Activated CD4-positive, alpha-beta memory T cell treated with anti-CD3 and anti-CD28 coated beads for 36 hours (primary cell): ENCODE measurements at regions of chr15 and their contacts with region 1.

Region 1: DNA sequence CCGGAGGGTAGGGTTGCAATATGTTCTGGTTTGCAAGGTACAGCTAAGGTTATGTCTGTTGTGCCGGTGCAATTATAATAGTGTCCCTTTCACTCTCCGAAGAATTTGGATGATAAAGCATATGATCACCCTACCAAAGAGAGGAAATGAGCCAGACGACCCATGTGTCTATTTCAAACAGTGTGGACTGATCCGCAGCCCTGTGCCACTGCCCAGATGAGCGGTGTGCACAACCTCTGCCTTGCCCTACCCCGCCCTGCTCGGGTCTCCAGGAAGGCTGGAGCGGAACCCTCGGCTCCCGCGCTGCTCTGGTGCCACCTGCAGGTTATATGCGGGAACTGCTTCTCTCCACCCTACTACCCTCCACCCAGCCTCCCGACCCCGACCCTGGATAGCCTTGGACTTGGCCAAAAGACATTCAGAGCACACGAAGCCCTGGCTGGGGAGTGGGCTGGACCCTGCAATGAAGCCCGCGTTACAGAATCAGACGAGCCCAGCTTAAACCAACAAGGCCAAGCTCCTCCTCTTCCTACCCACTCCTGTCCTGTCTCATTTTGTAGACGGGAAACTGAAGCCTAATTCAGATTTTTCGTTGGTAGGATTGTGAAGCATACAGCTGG is 68.4 kb upstream of the CHRNB4 start:
- DNase-seq: peak; percentile 80
- H3K4me3 Mint-ChIP-seq: no peak overlapping the region
- H3K27ac Mint-ChIP-seq: no peak overlapping the region
- H3K4me1 Mint-ChIP-seq: peaks cover 4% of the 10 kb centered on the region
- H3K27me3 Mint-ChIP-seq: peaks cover 24% of the 10 kb centered on the region

Region 2: DNA sequence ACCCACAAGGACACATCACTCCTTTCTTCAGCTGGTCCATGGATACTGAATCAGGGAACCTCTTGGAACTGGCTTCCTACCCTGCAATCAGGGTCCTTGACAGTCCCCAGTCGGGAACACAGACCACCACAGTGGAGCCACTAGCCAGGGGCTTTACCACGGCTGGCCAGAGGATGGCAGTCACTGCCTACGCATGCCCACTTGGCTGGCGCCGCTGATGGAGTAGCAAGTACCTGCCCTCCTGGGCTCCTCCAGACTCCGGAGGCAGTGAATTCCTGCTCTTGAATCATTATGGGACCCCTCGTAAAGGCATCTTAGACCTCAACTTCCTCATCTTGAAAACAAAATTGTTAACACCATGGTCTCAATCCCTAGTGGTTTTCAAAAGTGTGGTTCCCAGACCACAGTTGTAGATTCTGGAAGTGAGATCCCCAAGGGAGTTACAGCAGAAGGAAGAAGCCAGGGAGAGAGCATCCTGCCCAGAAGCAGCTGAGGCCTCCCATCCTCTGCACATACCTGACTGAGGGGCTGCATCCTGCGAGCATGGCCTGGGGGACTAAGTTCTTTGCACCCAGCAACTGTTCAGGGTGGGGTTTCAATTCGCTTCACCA is 400.8 kb before region 1 on chr15:
- CTCF ChIA-PET with region 1: interaction called, 4 read pairs
- POLR2A ChIA-PET with region 1: no interaction called
- intact Hi-C with region 1: loop called (anchors 10 kb)
- DNase-seq: peak; percentile 73
- H3K4me3 Mint-ChIP-seq: no peak overlapping the region
- H3K27ac Mint-ChIP-seq: no peak overlapping the region
- H3K4me1 Mint-ChIP-seq: no peaks in the 10 kb centered on the region
- H3K27me3 Mint-ChIP-seq: peaks cover 6% of the 10 kb centered on the region

Region 3: GRCh38 chr15:78618490-78618934 is 90.9 kb before region 1 on chr15:
- CTCF ChIA-PET with region 1: interaction called, 28 read pairs
- POLR2A ChIA-PET with region 1: no interaction called
- intact Hi-C with region 1: loop called (anchors 1 kb)
- DNase-seq: peak; percentile 85
- H3K4me3 Mint-ChIP-seq: no peak overlapping the region
- H3K27ac Mint-ChIP-seq: no peak overlapping the region
- H3K4me1 Mint-ChIP-seq: peaks cover 9% of the 10 kb centered on the region
- H3K27me3 Mint-ChIP-seq: peaks cover 41% of the 10 kb centered on the region

Region 4: GRCh38 chr15:78638658-78639314 is 70.6 kb before region 1 on chr15:
- CTCF ChIA-PET with region 1: interaction called, 30 read pairs
- POLR2A ChIA-PET with region 1: no interaction called
- intact Hi-C with region 1: loop called (anchors 1 kb)
- DNase-seq: peak; percentile 61
- H3K4me3 Mint-ChIP-seq: no peak overlapping the region
- H3K27ac Mint-ChIP-seq: no peak overlapping the region
- H3K4me1 Mint-ChIP-seq: peaks cover 10% of the 10 kb centered on the region
- H3K27me3 Mint-ChIP-seq: peaks cover 20% of the 10 kb centered on the region